HEK293 (cell line): ENCODE measurements at regions of chr7 and their contacts with region 1.

Region 1: GRCh38 chr7:116957874-116958273 is 4.6 kb downstream of the ST7 start:
- H3K4me3 ChIP-seq: no peak overlapping the region
- H3K27ac ChIP-seq: no peak overlapping the region
- H3K4me1 ChIP-seq: peaks cover 11% of the 10 kb centered on the region
- CTCF ChIP-seq: no peak

Region 2: DNA sequence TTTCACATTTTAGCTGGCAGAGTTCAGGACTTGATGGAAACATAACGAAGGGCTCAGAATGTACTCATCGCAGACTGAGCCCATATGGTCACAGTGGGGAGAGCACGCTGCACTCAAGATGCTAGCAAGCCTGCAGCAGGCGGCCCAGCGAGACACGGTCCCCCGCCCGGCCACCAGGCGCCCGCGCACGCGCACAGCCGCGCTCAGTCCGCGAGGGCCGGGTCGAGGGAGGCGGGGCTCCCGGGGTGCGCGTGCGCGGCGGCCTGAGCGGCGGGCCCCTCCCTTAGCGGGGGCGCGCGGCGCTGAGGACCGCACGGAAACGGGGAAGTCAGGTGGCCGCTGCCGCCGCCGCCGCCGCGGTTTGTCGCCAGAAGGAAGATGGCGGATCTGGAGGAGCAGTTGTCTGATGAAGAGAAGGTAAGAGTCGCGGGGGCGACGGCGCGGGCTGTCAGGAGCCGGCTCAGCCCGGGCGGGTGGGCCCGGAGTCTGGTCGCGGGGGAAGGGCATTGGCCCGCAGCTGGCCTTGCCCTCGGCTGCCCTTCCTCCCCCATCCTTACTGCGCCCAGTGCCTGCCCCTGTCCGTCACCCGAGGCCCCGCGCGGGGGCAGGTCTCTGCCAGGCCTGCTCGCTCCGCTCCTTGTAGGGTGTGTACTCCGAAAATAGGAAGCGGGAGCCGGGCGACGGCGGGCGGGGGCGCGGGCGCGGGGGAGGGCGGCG is 95.5 kb before region 1 on chr7 and contains the start of gene CAPZA2:
- CTCF ChIA-PET with region 1: interaction called, 4 read pairs
- POLR2A ChIA-PET with region 1: interaction called, 15 read pairs
- H3K4me3 ChIP-seq: peak within 1 kb of the TSS; percentile 99
- H3K27ac ChIP-seq: peak within 1 kb of the TSS; percentile 84
- H3K4me1 ChIP-seq: no peaks in the 10 kb centered on the region
- CTCF ChIP-seq: no peak

Region 3: GRCh38 chr7:117237646-117238045 is 279.8 kb after region 1 on chr7:
- CTCF ChIA-PET with region 1: no interaction called
- POLR2A ChIA-PET with region 1: no interaction called
- H3K4me3 ChIP-seq: no peak overlapping the region
- H3K27ac ChIP-seq: no peak overlapping the region
- H3K4me1 ChIP-seq: no peaks in the 10 kb centered on the region
- CTCF ChIP-seq: no peak